Activated CD8-positive, alpha-beta T cell treated with anti-CD3 and anti-CD28 coated beads for 36 hours (primary cell): ENCODE measurements at regions of chr6 and their contacts with region 1.

Region 1: DNA sequence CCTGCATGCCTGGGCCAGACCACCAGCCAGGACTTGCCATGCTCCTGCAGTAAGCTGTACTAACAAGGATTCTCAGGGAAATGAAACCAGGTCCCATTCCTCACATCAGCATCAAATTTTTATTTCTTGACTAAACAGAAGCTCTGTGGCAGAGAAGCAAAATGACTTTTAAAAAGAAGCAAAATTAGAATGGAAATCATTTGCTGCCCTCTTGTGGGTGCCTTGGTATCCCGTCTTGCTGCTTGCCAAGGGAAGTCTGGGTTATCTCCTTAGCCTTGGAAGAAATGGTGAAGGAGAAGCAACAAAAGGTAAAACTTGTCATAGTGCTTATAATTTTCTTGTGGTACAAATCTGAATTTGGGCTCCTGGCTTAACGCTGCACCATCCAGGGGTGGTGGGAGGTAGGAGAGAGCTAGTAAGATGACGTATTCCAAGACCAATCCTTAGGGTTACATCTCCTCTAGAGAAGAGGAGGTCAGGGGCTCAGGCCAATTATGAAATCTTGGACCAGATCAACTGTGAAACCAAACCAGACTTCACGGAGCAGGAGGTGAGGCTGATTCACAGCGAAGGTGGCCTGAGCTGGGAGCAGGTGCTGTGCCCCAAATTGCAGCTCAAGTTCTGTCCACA is 107.5 kb downstream of the FAXC start:
- DNase-seq: peak; percentile 11
- ATAC-seq: no peak
- H3K4me3 Mint-ChIP-seq: no peak overlapping the region
- H3K27ac Mint-ChIP-seq: no peak overlapping the region
- H3K4me1 Mint-ChIP-seq: no peaks in the 10 kb centered on the region
- H3K27me3 Mint-ChIP-seq: peaks cover 11% of the 10 kb centered on the region
- CTCF ChIP-seq: no peak

Region 2: DNA sequence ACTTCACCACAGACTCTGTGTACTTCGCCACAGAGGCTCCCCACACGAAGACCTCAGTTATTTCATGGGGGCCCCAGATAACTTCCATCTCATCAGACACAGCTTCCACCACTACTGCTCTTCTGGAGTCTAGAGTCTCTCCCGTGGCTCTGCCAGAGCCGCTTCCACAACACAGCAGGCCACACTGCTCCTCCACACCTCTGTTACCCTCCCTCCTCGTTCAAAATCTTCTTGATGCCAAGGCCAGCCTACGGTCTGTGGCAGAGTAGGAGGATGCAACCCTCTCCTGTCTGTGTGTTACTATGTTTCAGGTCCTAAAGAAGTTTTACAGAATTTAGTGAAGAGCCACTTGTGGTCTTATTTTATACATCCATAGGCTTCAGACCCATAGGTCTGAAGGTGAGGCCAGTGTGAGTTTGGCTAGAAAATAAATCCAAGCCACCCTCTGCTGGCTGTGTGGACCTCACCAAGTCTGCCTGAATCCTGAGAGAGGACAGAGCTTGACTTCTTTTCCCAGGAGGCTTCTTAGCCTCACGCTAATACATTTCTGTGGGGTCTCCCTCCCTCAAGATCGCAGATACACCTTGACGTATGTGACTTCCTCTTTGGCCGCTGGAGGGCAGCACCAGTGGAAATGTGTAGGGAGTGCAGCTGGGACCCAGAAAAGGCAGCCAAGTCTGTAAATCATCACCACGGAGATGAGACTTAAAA is 90.2 kb before region 1 on chr6:
- CTCF ChIA-PET with region 1: interaction called, 10 read pairs
- POLR2A ChIA-PET with region 1: no interaction called
- intact Hi-C with region 1: no loop called
- DNase-seq: peak; percentile 72
- ATAC-seq: peak; percentile 74
- H3K4me3 Mint-ChIP-seq: no peak overlapping the region
- H3K27ac Mint-ChIP-seq: no peak overlapping the region
- H3K4me1 Mint-ChIP-seq: no peaks in the 10 kb centered on the region
- H3K27me3 Mint-ChIP-seq: peaks cover 8% of the 10 kb centered on the region
- CTCF ChIP-seq: peak; percentile 63

Region 3: DNA sequence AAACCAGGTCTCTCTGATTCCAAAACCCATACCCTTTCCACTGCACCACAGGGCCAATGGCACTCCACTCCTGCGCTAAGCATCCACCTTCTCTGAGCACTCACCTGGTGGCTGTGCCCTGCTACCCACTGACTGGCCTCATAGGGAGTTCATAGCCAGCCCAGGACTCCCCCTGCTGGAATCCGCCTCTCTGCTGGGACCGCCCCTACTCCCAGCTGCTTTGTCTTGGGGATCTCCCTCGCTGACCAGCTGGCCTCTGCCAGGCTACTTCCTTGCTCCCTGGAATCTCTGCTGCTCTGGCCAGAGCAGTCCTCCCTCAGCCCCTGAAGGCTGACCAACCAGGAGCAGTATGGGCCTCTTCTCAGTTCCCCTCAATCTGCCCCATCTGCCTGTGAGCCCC is 22.2 kb before region 1 on chr6:
- CTCF ChIA-PET with region 1: no interaction called
- POLR2A ChIA-PET with region 1: no interaction called
- intact Hi-C with region 1: loop called (anchors 1 kb)
- DNase-seq: peak; percentile 6
- ATAC-seq: no peak
- H3K4me3 Mint-ChIP-seq: no peak overlapping the region
- H3K27ac Mint-ChIP-seq: no peak overlapping the region
- H3K4me1 Mint-ChIP-seq: no peaks in the 10 kb centered on the region
- H3K27me3 Mint-ChIP-seq: peaks cover 4% of the 10 kb centered on the region
- CTCF ChIP-seq: no peak

Region 4: DNA sequence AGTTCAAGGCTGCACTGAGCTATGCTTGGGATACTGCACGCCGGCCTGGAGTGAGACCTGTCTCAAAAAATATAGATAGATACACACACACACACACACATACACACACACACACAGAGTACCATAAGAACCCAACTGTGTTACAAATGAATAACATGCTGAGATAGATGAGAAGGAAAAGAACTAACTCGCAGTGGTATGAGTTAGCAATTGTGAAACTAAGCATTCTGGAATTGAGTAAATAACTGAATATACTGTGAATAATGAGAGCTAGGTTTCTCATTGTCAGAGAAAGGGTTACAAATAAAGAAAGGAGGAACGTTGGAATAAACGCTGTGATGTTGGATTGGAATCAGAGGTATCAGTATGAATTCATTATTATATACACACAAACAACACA is 122.0 kb after region 1 on chr6:
- CTCF ChIA-PET with region 1: no interaction called
- POLR2A ChIA-PET with region 1: no interaction called
- intact Hi-C with region 1: no loop called
- DNase-seq: no peak
- ATAC-seq: peak; percentile 18
- H3K4me3 Mint-ChIP-seq: no peak overlapping the region
- H3K27ac Mint-ChIP-seq: no peak overlapping the region
- H3K4me1 Mint-ChIP-seq: peaks cover 7% of the 10 kb centered on the region
- H3K27me3 Mint-ChIP-seq: peaks cover 9% of the 10 kb centered on the region
- CTCF ChIP-seq: no peak